Activated CD4-positive, alpha-beta T cell treated with anti-CD3 and anti-CD28 coated beads for 36 hours (primary cell): ENCODE measurements at regions of chr10 and their contacts with region 1.

Region 1: DNA sequence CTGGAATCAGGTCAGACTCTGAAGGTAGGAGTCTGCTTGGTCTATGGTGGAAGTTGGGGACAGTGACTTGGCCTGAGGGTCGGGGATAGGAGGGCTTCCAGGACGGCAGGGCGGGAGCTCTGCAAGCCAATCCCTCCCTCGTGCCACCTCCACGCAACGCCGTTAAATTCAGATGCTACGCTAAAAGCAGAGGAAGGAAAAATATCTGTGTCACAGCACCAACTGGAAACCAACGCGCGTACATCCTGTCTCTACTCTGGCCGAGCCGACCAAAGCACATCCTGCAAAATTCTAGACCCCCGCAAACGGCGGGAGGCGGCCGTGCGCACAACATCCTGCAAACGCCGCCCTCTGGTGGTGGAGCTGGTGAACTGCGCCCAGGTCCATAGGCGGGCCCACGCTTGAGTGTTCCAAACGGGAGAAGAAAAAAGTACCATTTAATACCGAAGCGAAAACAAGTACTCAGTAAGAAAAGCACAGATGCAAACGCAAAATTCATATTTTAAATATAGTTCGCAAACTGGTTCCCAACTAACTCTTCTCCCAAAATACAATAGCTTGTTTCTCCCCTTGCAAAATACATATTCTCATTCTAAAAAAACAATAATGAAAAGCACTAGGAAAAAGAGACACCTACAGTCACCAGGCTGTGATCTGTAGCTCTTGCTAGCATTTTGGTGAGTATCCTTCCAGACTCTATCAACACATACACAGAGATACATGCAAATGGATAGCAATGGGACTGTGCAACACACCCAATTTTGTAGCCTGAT is 45.7 kb upstream of the HSPA12A start:
- DNase-seq: peak; percentile 88
- ATAC-seq: peak; percentile 89
- H3K4me3 Mint-ChIP-seq: peak overlapping the region; percentile 41
- H3K27ac Mint-ChIP-seq: peak overlapping the region; percentile 37
- H3K4me1 Mint-ChIP-seq: peaks cover 21% of the 10 kb centered on the region
- H3K27me3 Mint-ChIP-seq: peaks cover 26% of the 10 kb centered on the region

Region 2: DNA sequence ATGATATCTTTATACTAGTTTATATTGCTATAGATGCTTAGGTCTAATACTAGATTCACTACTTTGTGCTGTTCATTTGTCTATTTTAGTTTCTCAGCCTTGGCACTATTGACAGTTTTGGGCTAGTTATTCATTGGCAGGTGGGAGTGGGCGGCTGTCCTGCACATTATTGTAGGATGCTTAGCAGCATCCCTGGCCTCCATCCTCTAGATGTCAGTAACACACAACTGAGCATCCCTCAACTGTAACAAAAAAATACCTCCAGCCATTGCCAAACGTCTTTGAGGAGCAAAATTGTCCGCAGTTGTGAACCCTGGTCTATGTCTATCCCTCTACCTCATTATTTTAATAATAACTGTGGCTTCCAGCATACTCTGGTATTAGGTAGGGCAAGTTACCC is 276.7 kb before region 1 on chr10:
- CTCF ChIA-PET with region 1: no interaction called
- POLR2A ChIA-PET with region 1: no interaction called
- intact Hi-C with region 1: no loop called
- DNase-seq: no peak
- ATAC-seq: no peak
- H3K4me3 Mint-ChIP-seq: no peak overlapping the region
- H3K27ac Mint-ChIP-seq: no peak overlapping the region
- H3K4me1 Mint-ChIP-seq: no peaks in the 10 kb centered on the region
- H3K27me3 Mint-ChIP-seq: peaks cover 4% of the 10 kb centered on the region

Region 3: GRCh38 chr10:116687633-116688032 is 100.4 kb before region 1 on chr10:
- CTCF ChIA-PET with region 1: interaction called, 39 read pairs
- POLR2A ChIA-PET with region 1: no interaction called
- intact Hi-C with region 1: loop called (anchors 1 kb)
- DNase-seq: no peak
- ATAC-seq: no peak
- H3K4me3 Mint-ChIP-seq: no peak overlapping the region
- H3K27ac Mint-ChIP-seq: no peak overlapping the region
- H3K4me1 Mint-ChIP-seq: no peaks in the 10 kb centered on the region
- H3K27me3 Mint-ChIP-seq: peaks cover 24% of the 10 kb centered on the region

Region 4: DNA sequence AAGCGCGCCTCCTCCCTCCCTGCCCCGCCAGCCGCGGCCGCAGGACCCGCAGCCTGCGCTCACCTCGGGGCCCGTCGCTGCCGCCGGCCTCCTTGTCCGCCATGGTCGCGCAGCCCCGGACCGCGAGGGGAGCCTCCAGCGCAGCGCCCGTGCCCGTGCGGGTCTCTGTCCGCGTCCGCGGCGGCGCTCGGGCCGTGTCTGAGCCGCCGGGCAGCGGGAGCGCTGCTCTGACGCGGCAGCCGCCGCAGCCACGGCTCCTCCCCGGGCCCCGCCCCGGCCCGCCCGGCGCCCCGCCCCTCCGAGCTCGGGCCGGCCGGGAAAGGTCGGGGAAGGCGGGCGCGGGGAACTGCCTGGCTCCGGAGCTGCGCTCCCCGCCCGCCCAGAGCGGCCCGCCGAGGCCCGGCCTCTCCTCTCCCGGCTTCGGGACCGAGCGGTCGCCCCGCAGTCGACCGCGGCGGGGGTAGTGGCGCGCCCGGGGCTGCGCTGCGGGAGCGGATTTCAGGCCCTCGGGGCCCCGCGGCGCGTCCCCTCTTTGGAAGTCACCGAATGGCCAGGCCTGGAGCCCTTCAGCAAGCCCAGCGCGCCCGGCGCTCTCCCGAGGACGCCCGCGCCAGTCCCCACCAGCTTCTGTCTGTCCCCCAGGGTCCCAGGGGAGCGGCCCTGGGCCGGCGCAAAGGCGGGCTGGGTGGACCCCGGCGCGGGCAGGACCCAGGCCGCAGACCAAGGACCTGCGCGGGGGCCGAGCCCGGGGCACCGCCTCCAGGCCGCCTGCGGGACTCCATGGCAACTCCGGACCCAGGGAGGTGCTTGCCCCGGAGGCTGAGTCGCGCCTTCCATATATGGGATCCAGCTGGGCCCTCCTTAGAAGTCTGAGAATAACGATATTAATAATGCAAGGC is 45.5 kb before region 1 on chr10 and contains the start of gene HSPA12A:
- CTCF ChIA-PET with region 1: interaction called, 5 read pairs
- POLR2A ChIA-PET with region 1: no interaction called
- intact Hi-C with region 1: loop called in 1 of 2 experiments (anchors 1 kb)
- DNase-seq: peak; percentile 72
- ATAC-seq: peak; percentile 92
- H3K4me3 Mint-ChIP-seq: peak within 1 kb of the TSS; percentile 43
- H3K27ac Mint-ChIP-seq: no peak within 1 kb of the TSS
- H3K4me1 Mint-ChIP-seq: peaks cover 4% of the 10 kb centered on the region
- H3K27me3 Mint-ChIP-seq: peaks cover 53% of the 10 kb centered on the region
- total RNA-seq, gene HSPA12A: 0.41 to 0.74 TPM

Region 5: GRCh38 chr10:116910910-116911309 is 122.8 kb after region 1 on chr10:
- CTCF ChIA-PET with region 1: no interaction called
- POLR2A ChIA-PET with region 1: no interaction called
- intact Hi-C with region 1: no loop called
- DNase-seq: no peak
- ATAC-seq: no peak
- H3K4me3 Mint-ChIP-seq: no peak overlapping the region
- H3K27ac Mint-ChIP-seq: no peak overlapping the region
- H3K4me1 Mint-ChIP-seq: no peaks in the 10 kb centered on the region
- H3K27me3 Mint-ChIP-seq: peaks cover 3% of the 10 kb centered on the region